Breast epithelium (tissue), 4 donors: ENCODE measurements at regions of chr5 and their contacts with region 1.

Region 1: DNA sequence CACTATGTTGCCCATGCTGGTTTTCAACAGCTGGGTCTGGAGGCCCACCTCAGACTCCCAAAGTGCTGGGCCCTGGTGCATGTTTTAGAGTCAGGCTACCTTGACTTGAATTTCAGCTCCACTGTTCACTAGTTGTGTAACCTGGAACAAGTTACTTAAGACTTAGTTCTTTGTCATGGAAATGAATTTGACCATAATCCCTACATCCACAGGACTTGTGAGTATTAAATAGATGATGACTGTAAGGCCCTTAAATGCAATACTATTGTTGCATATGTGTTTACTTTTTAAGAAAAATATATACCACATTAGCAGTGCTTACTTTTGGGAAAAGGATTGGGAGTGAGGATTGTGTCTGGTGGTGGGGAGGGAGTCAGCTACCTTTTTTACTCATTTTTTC is 16.4 kb downstream of the PAIP2 start:
- DNase-seq: no peak
- H3K4me3 ChIP-seq: no peak overlapping the region
- H3K27ac ChIP-seq: no peak overlapping the region
- H3K4me1 ChIP-seq: no peaks in the 10 kb centered on the region
- H3K27me3 ChIP-seq: no peaks in the 10 kb centered on the region
- CTCF ChIP-seq: no peak
- POLR2A ChIP-seq: no peak

Region 2: GRCh38 chr5:139368613-139369012 is 10.5 kb after region 1 on chr5:
- intact Hi-C with region 1: loop called (anchors 1 kb)
- DNase-seq: no peak
- H3K4me3 ChIP-seq: no peak overlapping the region
- H3K27ac ChIP-seq: no peak overlapping the region
- H3K4me1 ChIP-seq: no peaks in the 10 kb centered on the region
- H3K27me3 ChIP-seq: no peaks in the 10 kb centered on the region
- CTCF ChIP-seq: no peak
- POLR2A ChIP-seq: no peak

Region 3: DNA sequence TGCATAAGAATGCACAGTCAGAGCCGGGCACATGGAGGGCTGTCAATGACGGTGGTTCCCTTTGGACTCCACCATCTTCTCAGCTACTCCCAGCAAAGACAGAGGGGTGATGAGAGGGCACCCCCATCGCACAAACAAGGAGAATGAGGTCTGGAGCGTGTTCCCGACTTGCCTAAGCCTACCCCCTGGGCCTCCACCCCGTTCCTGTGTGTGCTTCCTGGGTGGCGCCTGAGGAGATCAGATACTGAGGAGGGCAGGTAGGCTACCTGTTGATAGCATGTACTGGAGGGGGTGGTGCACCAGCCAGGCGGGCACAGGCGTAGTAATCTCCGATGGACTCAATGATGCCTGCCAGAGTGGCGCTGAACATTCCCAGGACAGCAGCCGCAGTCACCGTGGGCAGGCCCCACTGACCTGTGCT is 20.9 kb after region 1 on chr5:
- intact Hi-C with region 1: loop called (anchors 1 kb)
- DNase-seq: peak in 1 of 2 donors; percentile 39
- H3K4me3 ChIP-seq: no peak overlapping the region
- H3K27ac ChIP-seq: no peak overlapping the region
- H3K4me1 ChIP-seq: no peaks in the 10 kb centered on the region
- H3K27me3 ChIP-seq: no peaks in the 10 kb centered on the region
- CTCF ChIP-seq: no peak
- POLR2A ChIP-seq: no peak